ENCODE measurements at regions of chr11 and their contacts with region 1.

Region 1: DNA sequence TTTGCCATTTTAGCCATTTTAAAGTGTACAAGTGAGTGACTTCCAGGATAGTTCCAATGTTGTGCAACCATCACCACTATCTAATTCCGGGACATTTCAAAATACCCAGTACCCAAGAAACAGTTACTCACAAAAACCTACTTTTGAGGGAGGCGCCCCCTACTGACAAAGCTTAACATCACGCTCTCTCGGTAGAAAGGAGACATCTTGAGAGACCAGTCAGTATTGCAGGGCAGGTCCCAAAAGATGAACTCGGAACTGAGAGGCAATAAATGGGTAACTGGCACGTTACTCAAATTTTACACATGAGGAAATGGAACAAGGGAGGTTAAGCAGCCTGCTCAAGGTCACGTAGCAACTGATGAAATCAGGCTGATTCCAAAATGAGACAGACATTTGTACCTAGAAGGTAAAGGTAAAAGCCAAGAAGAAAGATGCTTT is 50.0 kb upstream of the POU2AF1 start:
- DNase-seq: peak; percentile 40
- H3K4me3 Mint-ChIP-seq: no peak overlapping the region
- H3K27ac Mint-ChIP-seq: no peak overlapping the region
- H3K4me1 Mint-ChIP-seq: peaks cover 6% of the 10 kb centered on the region
- H3K27me3 Mint-ChIP-seq: peaks cover 6% of the 10 kb centered on the region

Region 2: DNA sequence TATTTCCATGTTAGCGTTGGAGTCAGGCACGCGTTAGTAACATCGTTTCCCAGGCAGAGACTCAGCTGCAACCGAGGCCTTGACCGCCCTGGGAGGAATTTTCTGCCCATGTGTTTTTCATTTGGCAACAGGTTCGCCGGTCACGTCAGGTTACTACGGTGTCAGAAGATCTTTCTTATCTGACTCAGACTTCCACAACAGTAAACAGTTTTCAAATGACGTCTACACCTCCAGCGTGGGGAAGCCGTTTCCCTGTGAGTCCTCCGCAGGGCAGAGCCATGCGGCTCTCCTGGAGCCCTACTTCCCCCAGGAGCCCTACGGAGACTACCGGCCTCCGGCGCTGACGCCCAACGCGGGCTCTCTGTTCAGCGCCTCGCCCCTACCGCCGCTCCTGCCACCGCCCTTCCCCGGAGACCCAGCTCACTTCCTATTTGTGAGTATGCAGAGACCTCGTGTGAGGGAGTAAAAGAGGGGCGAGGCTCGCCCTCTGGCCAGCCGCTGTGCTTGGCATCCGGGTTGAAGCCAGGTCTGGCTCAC is 145.1 kb before region 1 on chr11:
- intact Hi-C with region 1: loop called (anchors 1 kb)
- DNase-seq: no peak
- H3K4me3 Mint-ChIP-seq: no peak overlapping the region
- H3K27ac Mint-ChIP-seq: no peak overlapping the region
- H3K4me1 Mint-ChIP-seq: no peaks in the 10 kb centered on the region
- H3K27me3 Mint-ChIP-seq: peaks cover 4% of the 10 kb centered on the region

Region 3: DNA sequence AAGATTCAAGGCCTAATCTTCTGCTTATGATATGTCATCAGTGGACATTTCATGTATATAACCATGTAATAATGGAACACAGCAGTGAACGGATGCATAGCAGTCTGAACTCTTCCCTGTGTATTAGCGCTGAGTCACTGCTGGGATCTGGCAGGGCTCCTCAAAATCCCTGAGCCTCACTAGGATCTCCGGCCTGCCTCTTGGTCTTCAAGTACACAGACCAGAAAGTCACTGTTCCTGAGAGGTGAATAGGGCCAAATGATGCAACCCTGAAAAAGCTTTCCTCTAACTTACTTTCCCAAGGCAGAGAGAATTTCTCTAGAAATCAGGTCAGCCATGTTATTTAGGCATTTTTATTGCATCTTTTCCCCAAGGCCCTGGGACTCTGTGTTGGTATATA is 85.1 kb before region 1 on chr11:
- intact Hi-C with region 1: no loop called
- DNase-seq: no peak
- H3K4me3 Mint-ChIP-seq: no peak overlapping the region
- H3K27ac Mint-ChIP-seq: no peak overlapping the region
- H3K4me1 Mint-ChIP-seq: peaks cover 5% of the 10 kb centered on the region
- H3K27me3 Mint-ChIP-seq: no peaks in the 10 kb centered on the region